ENCODE measurements at regions of chr4 and their contacts with region 1.

Region 1: GRCh38 chr4:40719008-40719623 is 30.6 kb upstream of the NSUN7 start:
- DNase-seq: peak; percentile 28 to 83
- H3K4me3 ChIP-seq: 0 out of 2 replicates have a peak overlapping the region, but pooled peaks have one; percentile 8
- H3K27ac ChIP-seq: peak overlapping the region; percentile 66
- H3K4me1 ChIP-seq: peaks cover 59% of the 10 kb centered on the region
- H3K27me3 ChIP-seq: no peaks in the 10 kb centered on the region
- CTCF ChIP-seq: peak; percentile 76

Region 2: DNA sequence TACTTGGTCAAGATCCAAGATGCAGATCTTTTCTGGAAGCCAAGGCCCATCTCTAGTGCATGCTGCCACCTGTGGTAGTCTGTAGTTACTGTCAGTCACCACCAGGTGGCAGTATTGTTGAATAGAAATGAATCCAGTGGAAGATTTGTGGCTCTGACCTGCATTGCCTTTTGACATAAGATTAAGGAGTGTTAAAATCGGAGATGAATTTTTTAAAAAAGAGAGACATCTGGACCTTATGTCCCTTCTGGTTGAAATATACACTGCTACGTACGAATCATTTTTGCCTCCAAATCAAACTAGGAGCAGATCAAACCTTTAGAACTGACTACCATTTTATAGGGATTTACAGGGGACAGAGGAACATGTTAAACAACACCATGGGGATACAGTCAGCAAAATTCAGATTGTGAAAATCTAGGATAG is 569.1 kb before region 1 on chr4:
- CTCF ChIA-PET with region 1: no interaction called
- POLR2A ChIA-PET with region 1: no interaction called
- intact Hi-C with region 1: loop called (anchors 1 kb)
- DNase-seq: peak; percentile 40 to 61
- H3K4me3 ChIP-seq: no peak overlapping the region
- H3K27ac ChIP-seq: no peak overlapping the region
- H3K4me1 ChIP-seq: no peaks in the 10 kb centered on the region
- H3K27me3 ChIP-seq: no peaks in the 10 kb centered on the region
- CTCF ChIP-seq: peak; percentile 94

Region 3: GRCh38 chr4:40369437-40370274 is 349.5 kb before region 1 on chr4:
- CTCF ChIA-PET with region 1: interaction called, 19 read pairs
- POLR2A ChIA-PET with region 1: no interaction called
- intact Hi-C with region 1: no loop called
- DNase-seq: peak in 1 of 2 experiments; percentile 8
- H3K4me3 ChIP-seq: no peak overlapping the region
- H3K27ac ChIP-seq: no peak overlapping the region
- H3K4me1 ChIP-seq: peaks cover 15% of the 10 kb centered on the region
- H3K27me3 ChIP-seq: no peaks in the 10 kb centered on the region
- CTCF ChIP-seq: no peak

Region 4: DNA sequence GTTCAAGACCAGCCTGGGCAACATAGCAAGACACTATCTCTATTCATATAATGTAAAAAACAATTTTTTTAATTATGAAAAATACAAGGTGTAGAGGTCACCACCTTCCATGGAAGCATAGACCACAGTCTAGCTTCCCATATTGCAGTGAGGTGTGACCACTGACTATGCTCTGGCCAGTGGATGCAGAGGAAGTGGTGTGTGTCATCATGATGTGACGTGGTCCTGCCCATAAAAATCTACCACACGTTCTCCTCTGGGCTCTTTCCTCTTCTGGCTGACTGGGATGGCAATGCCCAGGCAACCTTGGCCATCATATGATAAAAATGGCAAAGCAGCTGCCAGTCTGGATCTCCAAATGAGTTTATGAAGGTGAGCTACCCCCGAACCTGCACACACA is 155.1 kb before region 1 on chr4:
- CTCF ChIA-PET with region 1: no interaction called
- POLR2A ChIA-PET with region 1: no interaction called
- intact Hi-C with region 1: loop called (anchors 2 kb)
- DNase-seq: peak; percentile 22 to 52
- H3K4me3 ChIP-seq: peak overlapping the region; percentile 40; the same call in 1 of the 2 replicates
- H3K27ac ChIP-seq: peak overlapping the region; percentile 98
- H3K4me1 ChIP-seq: peaks cover 88% of the 10 kb centered on the region
- H3K27me3 ChIP-seq: no peaks in the 10 kb centered on the region
- CTCF ChIP-seq: no peak

Region 5: GRCh38 chr4:40629401-40630334 is 89.4 kb before region 1 on chr4 and contains the start of gene RBM47:
- CTCF ChIA-PET with region 1: no interaction called
- POLR2A ChIA-PET with region 1: interaction called, 4 read pairs
- intact Hi-C with region 1: loop called (anchors 1 kb)
- DNase-seq: peak; percentile 89 to 94
- H3K4me3 ChIP-seq: peak within 1 kb of the TSS; percentile 96
- H3K27ac ChIP-seq: peak within 1 kb of the TSS; percentile 99
- H3K4me1 ChIP-seq: peaks cover 44% of the 10 kb centered on the region
- H3K27me3 ChIP-seq: no peaks in the 10 kb centered on the region
- CTCF ChIP-seq: no peak; the same call in 1 of the 2 replicates
- total RNA-seq, gene RBM47: 78.0 and 79.0 TPM in 2 replicates

Measured in PC-9 (cell line).